ENCODE measurements at regions of chr9 and their contacts with region 1.

Region 1: DNA sequence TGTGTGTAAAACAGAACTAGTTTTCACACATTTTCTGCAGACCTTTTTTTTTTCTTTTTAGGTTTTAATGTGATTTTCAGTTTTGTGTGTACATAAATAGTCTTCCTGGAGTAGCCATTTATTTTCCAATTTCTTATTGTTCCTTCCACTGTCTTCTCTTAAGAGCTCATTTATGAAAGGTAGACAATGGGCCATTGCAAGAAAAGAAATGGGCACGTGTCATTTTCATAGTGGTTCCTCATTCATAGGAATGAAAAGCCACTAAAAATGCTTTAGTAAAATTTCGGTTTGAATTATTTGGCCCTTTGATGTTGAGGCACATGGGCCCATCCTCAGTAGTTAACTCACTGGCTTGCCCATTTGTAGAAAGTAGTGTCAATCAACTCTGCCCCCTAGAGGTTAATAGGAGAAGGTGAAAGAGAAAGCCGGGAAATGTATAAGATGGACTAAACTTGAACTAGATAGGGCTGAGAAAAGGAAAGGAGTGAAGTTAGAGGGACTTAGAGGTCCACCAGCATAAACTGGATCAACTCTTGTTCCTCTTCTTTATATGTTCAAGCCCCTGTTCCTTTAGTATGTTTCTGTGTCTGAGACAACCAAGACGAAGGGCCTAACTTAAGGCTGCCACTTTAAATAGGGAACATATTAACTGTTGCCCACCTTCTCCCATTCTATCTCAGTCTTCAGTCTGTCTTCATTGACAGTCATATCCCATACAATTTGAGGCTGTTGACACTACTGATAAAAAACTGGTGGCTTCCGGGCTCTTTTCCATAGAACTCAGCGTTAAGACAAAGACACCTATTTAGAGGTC is 72.6 kb downstream of the SMARCA2 start:
- DNase-seq: no peak
- ATAC-seq: peak in 2 of 4 donors; percentile 45 to 50
- H3K4me3 ChIP-seq: no peak overlapping the region
- H3K27ac ChIP-seq: no peak overlapping the region
- H3K4me1 ChIP-seq: peaks cover 0 to 18% (median 6%) of the 10 kb centered on the region in 12 donors
- H3K27me3 ChIP-seq: no peaks in the 10 kb centered on the region
- CTCF ChIP-seq: peak; percentile 38 to 68 (median 54)
- POLR2A ChIP-seq: no peak

Region 2: DNA sequence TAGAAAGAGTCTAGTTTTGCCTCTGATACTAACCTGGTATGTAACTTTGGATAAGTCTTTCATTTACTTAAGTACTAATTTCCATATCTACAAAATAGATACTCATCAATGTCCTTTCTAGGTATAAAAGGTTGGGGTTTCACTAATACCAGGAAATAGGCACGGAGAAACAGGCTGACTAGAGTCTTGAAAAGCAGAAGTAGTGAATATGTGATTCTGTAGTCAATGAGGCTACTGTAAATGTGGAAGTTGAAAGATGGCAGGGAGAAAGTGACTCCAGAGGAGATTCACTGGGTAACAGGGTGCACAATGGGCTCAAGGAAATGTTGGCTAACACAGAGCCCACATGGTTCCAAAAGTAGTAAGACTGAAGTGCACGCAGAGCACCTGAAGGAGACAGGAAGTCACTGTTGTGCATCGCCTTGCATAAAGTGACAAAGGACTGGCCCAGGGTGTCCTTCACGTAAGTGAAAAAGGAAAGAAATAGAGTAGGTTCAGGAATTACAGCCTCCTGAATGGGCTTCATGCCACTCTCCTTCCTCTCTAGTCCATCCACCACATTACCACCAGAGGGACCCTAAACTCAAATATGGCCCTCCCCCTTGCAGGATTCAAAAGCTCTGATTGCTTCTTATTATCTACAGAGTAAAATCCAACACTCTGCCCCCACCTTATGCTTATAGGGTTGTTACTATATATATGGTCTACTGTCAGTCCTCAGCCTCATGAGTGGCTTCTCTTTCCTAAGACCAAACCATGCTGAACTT is 360.5 kb before region 1 on chr9:
- intact Hi-C with region 1: loop called in 1 of 10 experiments (anchors 10 kb)
- DNase-seq: no peak
- ATAC-seq: no peak
- H3K4me3 ChIP-seq: no peak overlapping the region
- H3K27ac ChIP-seq: no peak overlapping the region
- H3K4me1 ChIP-seq: no peaks in the 10 kb centered on the region
- H3K27me3 ChIP-seq: no peaks in the 10 kb centered on the region
- CTCF ChIP-seq: peak in 2 of 12 donors; percentile 6 to 14
- POLR2A ChIP-seq: no peak